ENCODE measurements at regions of chr5 and their contacts with region 1.

Region 1: DNA sequence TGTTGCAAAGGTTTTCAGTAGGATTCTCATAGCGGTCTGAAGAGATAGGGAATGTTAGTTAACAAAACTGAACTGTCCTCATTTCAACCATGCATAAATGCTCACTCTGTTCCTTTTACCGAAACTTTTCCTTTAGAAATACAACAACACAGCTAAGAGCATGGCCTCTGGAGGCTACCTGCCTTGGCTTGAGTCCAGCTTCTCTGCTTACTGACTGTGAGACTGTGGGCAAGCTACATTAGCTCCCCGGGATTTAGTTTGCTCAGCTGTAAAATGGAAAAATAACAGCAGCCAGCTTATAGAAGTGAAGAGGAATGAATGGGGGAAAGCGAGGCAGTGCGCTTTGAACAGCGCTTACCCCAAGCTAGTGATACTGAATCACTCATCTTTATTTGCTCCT is 507.9 kb upstream of the DAP start:
- DNase-seq: no peak
- H3K4me3 ChIP-seq: no peak overlapping the region
- H3K4me3 Mint-ChIP-seq: no peak overlapping the region
- H3K27ac Mint-ChIP-seq: no peak overlapping the region
- H3K4me1 ChIP-seq: peaks cover 10% of the 10 kb centered on the region; the same call in 1 of the 2 replicates
- H3K4me1 Mint-ChIP-seq: peaks cover 15% of the 10 kb centered on the region
- H3K27me3 ChIP-seq: no peaks in the 10 kb centered on the region
- H3K27me3 Mint-ChIP-seq: no peaks in the 10 kb centered on the region
- CTCF ChIP-seq: no peak

Region 2: GRCh38 chr5:11363631-11364178 is 94.8 kb after region 1 on chr5:
- CTCF ChIA-PET with region 1: no interaction called
- POLR2A ChIA-PET with region 1: no interaction called
- intact Hi-C with region 1: loop called (anchors 2 kb)
- DNase-seq: no peak
- H3K4me3 ChIP-seq: no peak overlapping the region
- H3K4me3 Mint-ChIP-seq: no peak overlapping the region
- H3K27ac Mint-ChIP-seq: no peak overlapping the region
- H3K4me1 ChIP-seq: no peaks in the 10 kb centered on the region; the same call in 1 of the 2 replicates
- H3K4me1 Mint-ChIP-seq: no peaks in the 10 kb centered on the region
- H3K27me3 ChIP-seq: no peaks in the 10 kb centered on the region
- H3K27me3 Mint-ChIP-seq: no peaks in the 10 kb centered on the region
- CTCF ChIP-seq: no peak

Region 3: GRCh38 chr5:11494340-11494739 is 225.4 kb after region 1 on chr5:
- CTCF ChIA-PET with region 1: no interaction called
- POLR2A ChIA-PET with region 1: no interaction called
- intact Hi-C with region 1: loop called (anchors 2 kb)
- DNase-seq: no peak
- H3K4me3 ChIP-seq: no peak overlapping the region
- H3K4me3 Mint-ChIP-seq: no peak overlapping the region
- H3K27ac Mint-ChIP-seq: no peak overlapping the region
- H3K4me1 ChIP-seq: peaks cover 8% of the 10 kb centered on the region; the same call in 1 of the 2 replicates
- H3K4me1 Mint-ChIP-seq: peaks cover 10% of the 10 kb centered on the region
- H3K27me3 ChIP-seq: no peaks in the 10 kb centered on the region
- H3K27me3 Mint-ChIP-seq: no peaks in the 10 kb centered on the region
- CTCF ChIP-seq: peak in 1 of 2 experiments; percentile 15

Region 4: GRCh38 chr5:11619339-11620024 is 350.6 kb after region 1 on chr5:
- CTCF ChIA-PET with region 1: no interaction called
- POLR2A ChIA-PET with region 1: no interaction called
- intact Hi-C with region 1: loop called (anchors 1 kb)
- DNase-seq: peak in 1 of 2 experiments; percentile 44
- H3K4me3 ChIP-seq: no peak overlapping the region
- H3K4me3 Mint-ChIP-seq: no peak overlapping the region
- H3K27ac Mint-ChIP-seq: no peak overlapping the region
- H3K4me1 ChIP-seq: peaks cover 4% of the 10 kb centered on the region
- H3K4me1 Mint-ChIP-seq: peaks cover 14% of the 10 kb centered on the region
- H3K27me3 ChIP-seq: no peaks in the 10 kb centered on the region
- H3K27me3 Mint-ChIP-seq: no peaks in the 10 kb centered on the region
- CTCF ChIP-seq: peak; percentile 22 to 42

Region 5: DNA sequence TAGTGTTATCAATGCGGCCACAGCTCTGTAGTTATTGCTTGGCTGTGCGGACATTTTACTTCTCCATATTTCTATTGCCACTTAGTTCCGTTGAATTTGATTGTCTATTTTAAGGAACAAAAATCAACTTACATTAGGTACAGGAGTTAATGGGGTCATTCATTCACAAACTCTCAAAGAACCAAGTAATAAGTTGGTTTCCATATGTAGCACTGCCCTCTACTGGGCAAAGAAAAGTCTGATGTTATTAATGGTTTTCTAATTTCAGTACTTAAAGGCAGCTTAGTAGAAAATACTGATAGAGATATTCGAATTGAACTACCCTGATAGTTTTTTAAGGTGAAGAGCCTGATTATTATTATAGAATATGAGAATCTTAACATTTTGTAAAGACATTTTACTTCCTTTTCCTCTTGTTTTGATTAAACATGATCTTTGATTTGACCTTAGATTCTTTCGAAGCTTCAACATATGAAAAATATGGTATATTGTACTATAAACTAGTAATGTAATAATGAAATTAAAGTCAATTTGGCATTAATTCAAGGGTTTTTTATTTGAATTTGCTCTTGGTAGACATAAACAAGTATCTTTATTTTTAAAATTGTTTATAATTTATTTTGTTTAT is 754.8 kb after region 1 on chr5:
- CTCF ChIA-PET with region 1: no interaction called
- POLR2A ChIA-PET with region 1: no interaction called
- intact Hi-C with region 1: loop called (anchors 1 kb)
- DNase-seq: peak in 1 of 2 experiments; percentile 42
- H3K4me3 ChIP-seq: no peak overlapping the region
- H3K4me3 Mint-ChIP-seq: no peak overlapping the region
- H3K27ac Mint-ChIP-seq: no peak overlapping the region
- H3K4me1 ChIP-seq: no peaks in the 10 kb centered on the region; the same call in 1 of the 2 replicates
- H3K4me1 Mint-ChIP-seq: no peaks in the 10 kb centered on the region
- H3K27me3 ChIP-seq: no peaks in the 10 kb centered on the region
- H3K27me3 Mint-ChIP-seq: no peaks in the 10 kb centered on the region
- CTCF ChIP-seq: peak; percentile 51 to 59

Measured in Caco-2 (cell line).